Adrenal gland (tissue), 19 donors: ENCODE measurements at regions of chr18 and their contacts with region 1.

Region 1: GRCh38 chr18:12890506-12890905 is 6.5 kb upstream of the PTPN2 start:
- DNase-seq: no peak
- H3K4me3 ChIP-seq: no peak overlapping the region
- H3K27ac ChIP-seq: no peak overlapping the region
- H3K4me1 ChIP-seq: peaks cover 0 to 5% of the 10 kb centered on the region in 2 donors
- H3K27me3 ChIP-seq: no peaks in the 10 kb centered on the region
- CTCF ChIP-seq: no peak
- POLR2A ChIP-seq: no peak

Region 2: DNA sequence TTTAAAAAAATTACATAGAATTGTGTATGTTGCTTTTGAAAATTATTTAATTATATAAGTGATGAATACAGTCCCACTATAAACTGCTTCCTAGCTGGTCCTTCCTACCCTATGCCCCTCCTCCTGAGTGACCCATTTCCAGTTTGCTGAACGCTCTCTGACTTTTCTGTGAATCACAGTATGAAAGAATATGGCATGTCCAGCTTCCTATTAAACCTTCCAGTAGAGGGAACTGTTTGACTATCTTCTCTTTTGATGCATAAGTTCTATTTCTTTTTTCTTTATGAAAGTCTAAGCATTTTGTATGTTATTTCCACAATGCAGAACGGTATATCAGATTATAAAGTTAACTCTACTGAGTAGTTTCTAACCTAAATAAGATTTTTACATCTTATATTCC is 146.4 kb before region 1 on chr18:
- intact Hi-C with region 1: loop called (anchors 5 to 10 kb)
- DNase-seq: peak in 2 of 7 donors; percentile 17 to 29
- H3K4me3 ChIP-seq: no peak overlapping the region
- H3K27ac ChIP-seq: no peak overlapping the region
- H3K4me1 ChIP-seq: no peaks in the 10 kb centered on the region
- H3K27me3 ChIP-seq: no peaks in the 10 kb centered on the region
- CTCF ChIP-seq: peak; percentile 30 to 80 (median 64)
- POLR2A ChIP-seq: no peak